PC-3 (cell line): ENCODE measurements at regions of chr5 and their contacts with region 1.

Region 1: DNA sequence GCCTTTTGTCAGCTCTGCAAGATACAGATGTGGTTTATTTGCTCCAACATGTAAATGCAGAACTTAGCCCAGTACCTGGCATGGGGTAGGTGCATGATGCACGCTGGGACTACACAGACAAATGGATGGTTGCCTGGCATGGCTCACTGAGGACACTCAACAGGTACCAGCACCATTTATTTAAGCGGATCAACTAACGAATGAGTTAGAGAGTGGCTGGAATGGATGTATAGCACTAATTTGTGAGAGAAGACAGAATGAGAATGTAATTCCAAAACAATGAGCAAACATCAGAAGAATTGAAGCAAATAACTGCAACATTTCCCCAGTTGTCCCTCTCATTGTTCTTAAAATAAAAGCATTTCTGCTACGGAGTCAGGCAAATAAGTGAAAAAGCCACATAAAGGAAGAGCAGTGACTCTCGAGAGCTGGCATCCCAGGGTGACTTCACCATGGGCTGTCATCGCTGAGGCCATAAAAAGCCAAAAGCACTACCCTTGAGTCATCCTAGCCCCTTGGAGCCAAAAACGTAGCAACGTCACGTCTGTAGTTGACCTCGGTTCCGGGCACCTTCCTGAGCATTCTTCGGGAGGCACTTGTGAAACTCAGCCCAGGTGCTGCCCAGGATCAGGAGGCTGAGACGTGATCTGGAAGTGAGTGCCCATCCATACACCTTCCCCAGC is 290.3 kb downstream of the NSG2 start:
- DNase-seq: peak; percentile 91
- ATAC-seq: peak; percentile 80
- H3K4me3 ChIP-seq: no peak overlapping the region
- H3K27ac ChIP-seq: peak overlapping the region; percentile 51
- H3K4me1 ChIP-seq: peaks cover 28% of the 10 kb centered on the region
- H3K27me3 ChIP-seq: peaks cover 9% of the 10 kb centered on the region; the same call in 1 of the 2 replicates
- CTCF ChIP-seq: no peak

Region 2: GRCh38 chr5:174348311-174348981 is 12.6 kb after region 1 on chr5:
- CTCF ChIA-PET with region 1: interaction called, 12 read pairs
- POLR2A ChIA-PET with region 1: no interaction called
- intact Hi-C with region 1: no loop called
- DNase-seq: no peak
- ATAC-seq: no peak
- H3K4me3 ChIP-seq: no peak overlapping the region
- H3K27ac ChIP-seq: no peak overlapping the region
- H3K4me1 ChIP-seq: no peaks in the 10 kb centered on the region
- H3K27me3 ChIP-seq: peaks cover 8% of the 10 kb centered on the region
- CTCF ChIP-seq: no peak

Region 3: DNA sequence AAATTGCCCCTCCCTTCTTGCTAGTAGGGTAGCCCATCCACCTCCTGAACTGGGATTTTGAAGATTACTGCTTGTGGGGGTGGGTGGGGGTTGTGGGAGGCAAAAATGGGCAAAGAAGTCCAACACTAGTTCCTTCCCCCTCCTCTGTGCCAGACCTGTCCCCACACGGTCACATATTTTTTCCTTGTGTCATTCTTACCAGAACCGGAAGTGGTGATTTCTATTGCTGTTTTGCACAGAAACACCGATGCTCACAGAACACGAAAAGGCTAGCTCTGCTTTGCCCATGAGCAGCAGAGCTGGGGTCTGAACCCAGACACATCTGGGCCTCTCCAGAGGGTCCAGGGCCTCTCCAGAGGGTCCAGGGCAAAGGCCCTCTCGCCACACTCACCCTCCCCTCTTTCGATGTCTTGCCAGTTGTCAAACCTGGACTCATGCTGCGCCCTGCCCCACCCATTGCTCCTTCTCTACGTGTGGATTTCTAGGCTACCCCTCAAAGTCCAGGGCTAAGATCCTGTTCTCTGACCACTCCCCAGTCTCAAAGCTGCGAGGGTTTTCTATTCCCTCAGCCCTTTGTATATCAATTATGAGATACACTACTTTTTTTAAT is 124.1 kb after region 1 on chr5:
- CTCF ChIA-PET with region 1: no interaction called
- POLR2A ChIA-PET with region 1: no interaction called
- intact Hi-C with region 1: no loop called
- DNase-seq: peak; percentile 40
- ATAC-seq: no peak
- H3K4me3 ChIP-seq: no peak overlapping the region
- H3K27ac ChIP-seq: no peak overlapping the region
- H3K4me1 ChIP-seq: peaks cover 22% of the 10 kb centered on the region
- H3K27me3 ChIP-seq: no peaks in the 10 kb centered on the region
- CTCF ChIP-seq: no peak